ENCODE measurements at regions of chr14 and their contacts with region 1.

Region 1: GRCh38 chr14:75609606-75610471 is 31.4 kb downstream of the FLVCR2 start:
- DNase-seq: no peak
- H3K4me3 ChIP-seq: no peak overlapping the region
- H3K27ac ChIP-seq: no peak overlapping the region
- H3K4me1 ChIP-seq: no peaks in the 10 kb centered on the region
- H3K27me3 ChIP-seq: peaks cover 25% of the 10 kb centered on the region
- CTCF ChIP-seq: no peak

Region 2: GRCh38 chr14:75794615-75795038 is 184.8 kb after region 1 on chr14:
- CTCF ChIA-PET with region 1: interaction called, 15 read pairs
- POLR2A ChIA-PET with region 1: no interaction called
- intact Hi-C with region 1: no loop called
- DNase-seq: no peak
- H3K4me3 ChIP-seq: no peak overlapping the region
- H3K27ac ChIP-seq: no peak overlapping the region
- H3K4me1 ChIP-seq: no peaks in the 10 kb centered on the region
- H3K27me3 ChIP-seq: no peaks in the 10 kb centered on the region
- CTCF ChIP-seq: 0 out of 2 replicates have a peak, but pooled peaks have one; percentile 13

Measured in A673 (cell line).